ENCODE measurements at regions of chr1 and their contacts with region 1.

Region 1: DNA sequence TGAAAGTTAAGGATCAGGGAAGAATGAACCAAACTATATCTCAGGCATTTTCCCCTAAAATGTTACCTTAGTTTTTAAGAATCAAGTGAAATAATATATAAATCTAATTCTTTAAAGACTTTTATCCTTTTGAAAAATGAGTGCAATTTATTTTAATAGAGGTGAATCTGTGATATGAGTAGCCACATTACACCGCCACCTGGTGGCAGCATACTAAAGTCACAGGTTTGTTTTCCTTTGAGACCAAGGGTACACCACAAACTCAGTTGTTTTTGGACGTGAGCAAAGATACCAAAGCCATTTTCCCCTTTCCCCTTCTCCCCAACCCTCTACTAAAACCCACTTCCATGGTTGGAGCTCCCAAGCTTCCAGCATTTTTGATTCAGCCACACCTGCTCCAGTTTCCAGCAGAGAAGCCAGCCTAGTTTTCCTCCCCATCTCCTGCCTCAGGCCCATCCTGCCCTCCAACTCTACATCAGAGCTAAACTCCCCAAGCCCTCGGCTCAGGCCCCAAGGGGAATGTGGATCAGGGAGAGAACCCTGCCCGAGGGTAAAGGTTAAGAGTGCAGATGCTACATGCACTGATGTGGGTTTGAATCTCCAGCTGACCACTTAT is 22.9 kb upstream of the LDLRAP1 start:
- DNase-seq: peak; percentile 84
- H3K4me3 ChIP-seq: no peak overlapping the region
- H3K27ac ChIP-seq: no peak overlapping the region
- H3K4me1 ChIP-seq: no peaks in the 10 kb centered on the region
- H3K27me3 ChIP-seq: no peaks in the 10 kb centered on the region
- CTCF ChIP-seq: peak; percentile 85 to 92 (median 86)
- POLR2A ChIP-seq: no peak

Region 2: DNA sequence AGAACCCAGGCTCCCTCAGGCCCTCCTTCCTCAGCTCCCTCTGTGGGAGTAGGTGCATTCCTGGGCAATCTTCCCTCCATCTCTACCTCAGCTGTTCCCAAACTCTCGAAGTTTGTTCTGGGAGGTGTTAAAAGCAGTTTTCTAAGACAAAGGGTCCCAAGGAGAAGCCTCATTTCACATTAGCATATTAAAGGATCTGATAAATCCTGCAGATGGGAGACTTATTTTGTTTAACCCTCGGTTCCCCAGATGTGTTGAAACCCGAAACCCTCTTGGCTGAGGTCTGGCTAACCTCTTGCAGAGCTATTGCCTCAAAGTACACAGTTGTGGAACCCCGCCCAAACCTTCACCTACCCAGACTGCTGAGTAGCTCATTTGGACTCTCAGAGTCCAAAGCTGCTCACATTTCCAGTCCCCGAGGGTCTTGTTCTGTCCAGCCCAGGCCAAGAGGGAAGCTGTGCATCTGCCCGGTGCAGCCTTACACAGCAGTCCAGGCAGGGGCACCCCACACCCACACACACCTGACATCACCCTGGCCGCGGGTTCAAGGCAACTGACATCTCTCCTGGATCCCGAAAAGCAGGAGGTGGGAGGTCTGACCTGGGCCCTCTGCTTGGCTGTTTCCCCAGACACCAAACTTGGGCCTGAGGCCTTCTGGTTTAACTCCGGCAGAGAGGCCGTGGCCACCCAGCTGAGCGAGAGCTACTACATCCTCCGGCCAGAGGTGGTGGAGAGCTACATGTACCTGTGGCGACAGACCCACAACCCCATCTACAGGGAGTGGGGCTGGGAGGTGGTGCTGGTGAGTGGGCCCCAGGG is 260.0 kb after region 1 on chr1:
- intact Hi-C with region 1: loop called (anchors 10 kb)
- DNase-seq: peak; percentile 74
- H3K4me3 ChIP-seq: no peak overlapping the region
- H3K27ac ChIP-seq: no peak overlapping the region
- H3K4me1 ChIP-seq: peaks cover 10% of the 10 kb centered on the region
- H3K27me3 ChIP-seq: no peaks in the 10 kb centered on the region
- CTCF ChIP-seq: no peak
- POLR2A ChIP-seq: no peak